HCT116 (cell line): ENCODE measurements at regions of chr7 and their contacts with region 1.

Region 1: DNA sequence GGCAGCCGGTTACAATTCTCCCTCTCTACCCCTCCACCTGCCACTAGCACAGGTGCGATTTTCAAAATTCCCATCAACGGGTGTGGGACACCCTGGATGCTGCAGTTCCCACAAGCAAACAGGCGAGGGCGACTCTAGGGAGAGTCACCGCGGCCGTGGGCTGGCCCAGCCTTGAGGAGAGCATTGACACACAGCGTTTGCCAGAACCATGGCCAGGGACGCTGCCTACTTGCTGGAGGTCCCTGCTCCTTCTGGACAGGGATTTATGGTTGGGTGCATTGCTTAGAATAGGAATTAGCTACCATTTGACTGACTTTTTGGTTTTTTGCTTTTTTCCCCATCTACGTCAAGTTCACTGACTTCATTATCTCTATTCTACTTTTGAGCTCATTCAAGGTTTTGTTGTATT is 19.0 kb upstream of the CLDN4 start:
- DNase-seq: no peak
- ATAC-seq: peak; percentile 81
- H3K4me3 ChIP-seq: no peak overlapping the region
- H3K27ac ChIP-seq: 0 out of 2 replicates have a peak overlapping the region, but pooled peaks have one; percentile 13
- H3K4me1 ChIP-seq: peaks cover 43 to 70% of the 10 kb centered on the region in 2 experiments
- H3K27me3 ChIP-seq: no peaks in the 10 kb centered on the region
- CTCF ChIP-seq: peak; percentile 54 to 88 (median 87); a peak in 5 of 6 replicates
- POLR2A ChIP-seq: no peak
- RAD21 ChIP-seq: peak; percentile 90

Region 2: GRCh38 chr7:73533742-73534141 is 278.0 kb before region 1 on chr7:
- CTCF ChIA-PET with region 1: no interaction called
- POLR2A ChIA-PET with region 1: no interaction called
- RAD21 ChIA-PET with region 1: no interaction called
- intact Hi-C with region 1: no loop called
- DNase-seq: no peak
- ATAC-seq: 0 out of 2 replicates have a peak, but pooled peaks have one; percentile 42
- H3K4me3 ChIP-seq: no peak overlapping the region
- H3K27ac ChIP-seq: no peak overlapping the region
- H3K4me1 ChIP-seq: peaks cover 0 to 4% of the 10 kb centered on the region in 2 experiments; a peak in 1 of 4 replicates
- H3K27me3 ChIP-seq: no peaks in the 10 kb centered on the region
- CTCF ChIP-seq: no peak
- POLR2A ChIP-seq: no peak
- RAD21 ChIP-seq: no peak

Region 3: GRCh38 chr7:73822319-73823076 is 10.7 kb after region 1 on chr7:
- CTCF ChIA-PET with region 1: interaction called, 12 read pairs
- POLR2A ChIA-PET with region 1: interaction called, 9 read pairs
- RAD21 ChIA-PET with region 1: interaction called in 1 of 2 experiments, 4 read pairs
- intact Hi-C with region 1: loop called (anchors 2 kb)
- DNase-seq: peak; percentile 93
- ATAC-seq: peak; percentile 93
- H3K4me3 ChIP-seq: peak overlapping the region; percentile 20 to 42
- H3K27ac ChIP-seq: peak overlapping the region; percentile 82
- H3K4me1 ChIP-seq: peaks cover 60 to 78% of the 10 kb centered on the region in 2 experiments
- H3K27me3 ChIP-seq: no peaks in the 10 kb centered on the region
- CTCF ChIP-seq: no peak
- POLR2A ChIP-seq: no peak
- RAD21 ChIP-seq: no peak

Region 4: GRCh38 chr7:73842247-73842895 is 30.6 kb after region 1 on chr7 and contains the start of gene METTL27:
- CTCF ChIA-PET with region 1: interaction called, 6 read pairs
- POLR2A ChIA-PET with region 1: interaction called, 16 read pairs
- RAD21 ChIA-PET with region 1: interaction called in 1 of 2 experiments, 4 read pairs
- intact Hi-C with region 1: no loop called
- DNase-seq: peak; percentile 88
- ATAC-seq: peak; percentile 88
- H3K4me3 ChIP-seq: peak within 1 kb of the TSS; percentile 85 to 93
- H3K27ac ChIP-seq: peak within 1 kb of the TSS; percentile 90
- H3K4me1 ChIP-seq: peaks cover 33 to 59% of the 10 kb centered on the region in 2 experiments
- H3K27me3 ChIP-seq: no peaks in the 10 kb centered on the region
- CTCF ChIP-seq: no peak
- POLR2A ChIP-seq: peak; percentile 71
- RAD21 ChIP-seq: no peak
- total RNA-seq, gene METTL27: 30.4 TPM

Region 5: GRCh38 chr7:73851410-73852234 is 39.9 kb after region 1 on chr7:
- CTCF ChIA-PET with region 1: interaction called, 5 read pairs
- POLR2A ChIA-PET with region 1: no interaction called
- RAD21 ChIA-PET with region 1: no interaction called
- intact Hi-C with region 1: loop called (anchors 1 kb)
- DNase-seq: peak; percentile 92
- ATAC-seq: peak; percentile 66
- H3K4me3 ChIP-seq: peak overlapping the region in 1 of 2 experiments; percentile 16; a peak in 1 of 4 replicates
- H3K27ac ChIP-seq: peak overlapping the region; percentile 94
- H3K4me1 ChIP-seq: peaks cover 43 to 72% of the 10 kb centered on the region in 2 experiments
- H3K27me3 ChIP-seq: no peaks in the 10 kb centered on the region
- CTCF ChIP-seq: no peak
- POLR2A ChIP-seq: no peak
- RAD21 ChIP-seq: no peak